CD8-positive, alpha-beta memory T cell (primary cell): ENCODE measurements at regions of chr2 and their contacts with region 1.

Region 1: DNA sequence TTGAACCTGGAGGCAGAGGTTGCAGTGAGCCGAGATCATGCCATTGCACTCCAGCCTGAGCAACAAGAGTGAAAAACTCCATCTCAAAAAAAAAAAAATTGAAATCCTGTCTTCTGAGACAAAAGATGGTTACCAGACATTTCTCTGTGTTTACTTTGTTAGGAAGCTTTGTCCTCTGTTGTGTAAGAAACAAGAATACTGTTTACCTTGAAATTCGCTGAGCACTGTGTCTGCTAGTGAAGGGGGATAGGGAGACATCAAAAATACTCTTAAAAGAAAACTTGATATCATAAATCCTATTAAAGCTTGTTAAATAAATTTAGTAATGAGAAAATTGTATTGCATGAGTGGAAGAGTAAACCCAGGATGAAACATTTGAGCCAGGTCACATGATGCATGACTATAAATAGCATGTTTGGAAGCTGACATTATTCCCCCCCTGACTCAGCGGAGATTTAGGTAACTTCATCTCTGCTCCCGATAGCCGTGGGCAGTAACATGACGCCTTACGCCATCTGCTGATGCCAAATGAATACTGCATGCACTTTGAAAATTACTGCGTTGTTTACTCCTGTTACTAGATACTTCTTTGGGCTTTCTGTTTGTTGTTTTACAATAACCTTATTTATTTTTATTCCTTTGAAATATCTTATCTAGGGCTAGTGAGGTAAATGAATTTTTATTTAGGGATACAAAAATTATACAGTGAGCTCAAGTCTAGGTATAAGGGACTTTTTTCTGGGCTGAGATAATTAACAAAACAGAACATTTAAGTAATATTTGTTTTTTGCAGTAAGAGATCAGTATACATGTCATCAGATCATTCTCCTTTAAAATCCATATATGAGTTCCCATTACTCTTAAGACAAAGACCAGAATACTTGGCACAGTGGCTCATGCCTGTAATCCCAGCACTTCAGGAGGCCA is 134.9 kb downstream of the MAP3K20 start:
- DNase-seq: peak; percentile 12 to 53 (median 30)
- H3K4me3 ChIP-seq: no peak overlapping the region
- H3K4me3 Mint-ChIP-seq: no peak overlapping the region
- H3K27ac ChIP-seq: no peak overlapping the region
- H3K27ac Mint-ChIP-seq: no peak overlapping the region
- H3K4me1 ChIP-seq: no peaks in the 10 kb centered on the region
- H3K4me1 Mint-ChIP-seq: peaks cover 0 to 7% (median 5%) of the 10 kb centered on the region in 3 donors
- H3K27me3 ChIP-seq: no peaks in the 10 kb centered on the region
- H3K27me3 Mint-ChIP-seq: peaks cover 0 to 5% of the 10 kb centered on the region in 2 donors

Region 2: GRCh38 chr2:172995323-172996244 is 214.9 kb before region 1 on chr2:
- CTCF ChIA-PET with region 1: no interaction called
- POLR2A ChIA-PET with region 1: no interaction called
- DNase-seq: no peak
- H3K4me3 ChIP-seq: no peak overlapping the region
- H3K4me3 Mint-ChIP-seq: no peak overlapping the region
- H3K27ac ChIP-seq: no peak overlapping the region
- H3K27ac Mint-ChIP-seq: no peak overlapping the region
- H3K4me1 ChIP-seq: no peaks in the 10 kb centered on the region
- H3K4me1 Mint-ChIP-seq: no peaks in the 10 kb centered on the region
- H3K27me3 ChIP-seq: no peaks in the 10 kb centered on the region
- H3K27me3 Mint-ChIP-seq: peaks cover 10 to 22% of the 10 kb centered on the region in 2 donors

Region 3: GRCh38 chr2:173021939-173022371 is 188.6 kb before region 1 on chr2:
- CTCF ChIA-PET with region 1: interaction called, 86 read pairs
- POLR2A ChIA-PET with region 1: no interaction called
- DNase-seq: no peak
- H3K4me3 ChIP-seq: no peak overlapping the region
- H3K4me3 Mint-ChIP-seq: no peak overlapping the region
- H3K27ac ChIP-seq: no peak overlapping the region
- H3K27ac Mint-ChIP-seq: no peak overlapping the region
- H3K4me1 ChIP-seq: no peaks in the 10 kb centered on the region
- H3K4me1 Mint-ChIP-seq: no peaks in the 10 kb centered on the region
- H3K27me3 ChIP-seq: no peaks in the 10 kb centered on the region
- H3K27me3 Mint-ChIP-seq: peaks cover 4 to 12% of the 10 kb centered on the region in 2 donors

Region 4: GRCh38 chr2:173027181-173028128 is 183.1 kb before region 1 on chr2:
- CTCF ChIA-PET with region 1: interaction called, 86 read pairs
- POLR2A ChIA-PET with region 1: no interaction called
- DNase-seq: peak; percentile 55 to 79 (median 59)
- H3K4me3 ChIP-seq: no peak overlapping the region
- H3K4me3 Mint-ChIP-seq: no peak overlapping the region
- H3K27ac ChIP-seq: no peak overlapping the region
- H3K27ac Mint-ChIP-seq: no peak overlapping the region
- H3K4me1 ChIP-seq: no peaks in the 10 kb centered on the region
- H3K4me1 Mint-ChIP-seq: peaks cover 0 to 3% (median 3%) of the 10 kb centered on the region in 3 donors
- H3K27me3 ChIP-seq: no peaks in the 10 kb centered on the region
- H3K27me3 Mint-ChIP-seq: peaks cover 0 to 13% of the 10 kb centered on the region in 2 donors

Region 5: DNA sequence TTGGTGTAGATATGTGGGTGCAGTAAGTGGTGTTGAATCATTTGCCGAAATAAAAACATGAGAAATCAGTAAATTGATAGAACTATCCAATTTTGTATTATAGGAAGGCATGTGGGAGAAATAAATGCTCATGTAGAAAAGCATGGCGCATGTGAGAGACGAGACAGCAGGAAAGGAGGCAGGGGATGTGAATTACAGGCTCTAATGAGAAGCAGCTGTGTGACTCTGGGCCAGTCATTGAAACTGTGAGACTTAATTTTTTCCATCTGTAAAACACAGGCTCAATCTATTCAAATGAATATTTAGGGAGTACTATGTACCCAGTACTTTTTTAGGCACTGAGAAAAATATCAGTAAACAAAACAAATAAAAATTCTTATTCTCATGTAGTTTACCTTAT is 177.4 kb before region 1 on chr2:
- CTCF ChIA-PET with region 1: interaction called, 86 read pairs
- POLR2A ChIA-PET with region 1: no interaction called
- DNase-seq: no peak
- H3K4me3 ChIP-seq: no peak overlapping the region
- H3K4me3 Mint-ChIP-seq: no peak overlapping the region
- H3K27ac ChIP-seq: no peak overlapping the region
- H3K27ac Mint-ChIP-seq: no peak overlapping the region
- H3K4me1 ChIP-seq: no peaks in the 10 kb centered on the region
- H3K4me1 Mint-ChIP-seq: no peaks in the 10 kb centered on the region
- H3K27me3 ChIP-seq: no peaks in the 10 kb centered on the region
- H3K27me3 Mint-ChIP-seq: peaks cover 0 to 4% of the 10 kb centered on the region in 2 donors

Region 6: DNA sequence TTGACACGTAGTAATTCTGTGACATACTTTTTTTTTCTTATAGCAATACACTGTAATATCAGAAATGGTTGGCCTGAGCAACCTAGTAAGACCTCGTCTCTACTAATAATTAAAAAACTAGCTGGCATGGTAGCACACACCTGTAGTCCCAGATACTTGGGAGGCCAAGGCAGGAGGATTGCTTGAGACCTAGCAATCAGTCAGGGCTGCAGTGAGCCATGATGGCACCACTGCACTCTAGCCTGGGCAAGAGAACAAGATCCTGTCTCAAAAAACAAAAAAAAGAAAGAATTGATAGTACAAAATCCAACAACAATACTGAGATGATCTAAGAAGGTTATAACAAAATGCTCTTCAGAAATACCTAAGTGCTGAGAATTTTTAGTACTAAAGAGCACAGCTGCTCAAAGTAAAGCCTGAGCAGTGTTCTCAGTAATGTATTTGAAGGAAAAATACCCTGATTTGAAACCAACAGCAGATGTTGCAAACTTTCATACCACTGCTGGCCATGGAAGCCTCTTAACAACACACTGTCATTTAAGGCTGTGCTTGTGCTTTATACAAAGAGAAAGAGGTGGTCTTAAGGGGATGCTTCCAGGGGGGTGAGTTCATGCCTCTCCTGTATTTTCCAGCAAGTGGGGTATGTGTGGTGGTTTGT is 11.5 kb after region 1 on chr2:
- CTCF ChIA-PET with region 1: interaction called, 11 read pairs
- POLR2A ChIA-PET with region 1: no interaction called
- DNase-seq: no peak
- H3K4me3 ChIP-seq: no peak overlapping the region
- H3K4me3 Mint-ChIP-seq: no peak overlapping the region
- H3K27ac ChIP-seq: no peak overlapping the region
- H3K27ac Mint-ChIP-seq: no peak overlapping the region
- H3K4me1 ChIP-seq: no peaks in the 10 kb centered on the region
- H3K4me1 Mint-ChIP-seq: peaks cover 4 to 7% (median 5%) of the 10 kb centered on the region in 3 donors
- H3K27me3 ChIP-seq: no peaks in the 10 kb centered on the region
- H3K27me3 Mint-ChIP-seq: peaks cover 0 to under 1% of the 10 kb centered on the region in 2 donors